ENCODE measurements at regions of chr19 and their contacts with region 1.

Region 1: DNA sequence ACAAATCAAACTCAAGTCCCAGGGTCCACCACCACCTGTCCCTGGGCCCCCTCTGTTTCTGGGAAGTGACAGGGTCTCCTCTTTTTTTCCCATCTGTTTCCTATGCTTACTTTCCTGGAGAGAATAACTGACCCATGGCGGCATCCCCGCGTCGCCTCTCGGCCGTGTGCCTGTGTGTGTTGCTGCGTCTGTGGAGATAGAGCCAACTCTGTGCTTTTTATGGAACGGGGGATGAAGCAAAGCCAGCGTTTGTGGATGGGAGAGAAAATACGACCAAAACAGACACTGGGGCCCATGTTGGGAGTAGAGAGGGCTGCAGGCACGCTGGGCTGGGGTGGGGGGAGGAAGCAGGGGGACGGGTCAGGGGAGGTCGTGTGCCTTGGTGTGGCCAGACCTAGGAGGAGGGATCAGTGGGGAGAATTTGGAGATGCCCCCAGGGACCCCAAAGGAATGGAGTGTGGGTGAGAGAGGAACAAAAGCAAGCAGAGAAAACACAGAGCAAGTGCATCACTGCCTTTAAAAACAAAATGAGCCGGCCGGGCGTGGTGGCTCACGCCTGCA is 16.6 kb downstream of the PLK5 start:
- DNase-seq: peak in 1 of 5 donors; percentile 34
- H3K4me3 ChIP-seq: no peak overlapping the region
- H3K27ac ChIP-seq: no peak overlapping the region
- H3K4me1 ChIP-seq: no peaks in the 10 kb centered on the region
- H3K27me3 ChIP-seq: no peaks in the 10 kb centered on the region
- CTCF ChIP-seq: no peak

Region 2: GRCh38 chr19:1672038-1672768 is 131.8 kb after region 1 on chr19:
- intact Hi-C with region 1: loop called (anchors 10 kb)
- DNase-seq: peak in 4 of 5 donors; percentile 41 to 80 (median 63)
- H3K4me3 ChIP-seq: no peak overlapping the region
- H3K27ac ChIP-seq: no peak overlapping the region
- H3K4me1 ChIP-seq: peaks cover 0 to 3% (median 2%) of the 10 kb centered on the region in 3 donors
- H3K27me3 ChIP-seq: peaks cover 35% of the 10 kb centered on the region
- CTCF ChIP-seq: peak; percentile 60